ENCODE measurements at regions of chr4 and their contacts with region 1.

Region 1: GRCh38 chr4:36208893-36209473 is 35.3 kb downstream of the ARAP2 start:
- DNase-seq: peak in 6 of 9 donors; percentile 22 to 42 (median 32)
- ATAC-seq: peak; percentile 79
- H3K4me3 ChIP-seq: no peak overlapping the region
- H3K4me3 Mint-ChIP-seq: peak overlapping the region in 9 of 10 donors; percentile 34 to 68 (median 57)
- H3K27ac ChIP-seq: no peak overlapping the region
- H3K27ac Mint-ChIP-seq: peak overlapping the region in 7 of 9 donors; percentile 20 to 84 (median 45)
- H3K4me1 ChIP-seq: peaks cover 5 to 45% of the 10 kb centered on the region in 2 donors
- H3K4me1 Mint-ChIP-seq: peaks cover 16 to 53% (median 43%) of the 10 kb centered on the region in 7 donors
- H3K27me3 ChIP-seq: no peaks in the 10 kb centered on the region
- H3K27me3 Mint-ChIP-seq: no peaks in the 10 kb centered on the region

Region 2: DNA sequence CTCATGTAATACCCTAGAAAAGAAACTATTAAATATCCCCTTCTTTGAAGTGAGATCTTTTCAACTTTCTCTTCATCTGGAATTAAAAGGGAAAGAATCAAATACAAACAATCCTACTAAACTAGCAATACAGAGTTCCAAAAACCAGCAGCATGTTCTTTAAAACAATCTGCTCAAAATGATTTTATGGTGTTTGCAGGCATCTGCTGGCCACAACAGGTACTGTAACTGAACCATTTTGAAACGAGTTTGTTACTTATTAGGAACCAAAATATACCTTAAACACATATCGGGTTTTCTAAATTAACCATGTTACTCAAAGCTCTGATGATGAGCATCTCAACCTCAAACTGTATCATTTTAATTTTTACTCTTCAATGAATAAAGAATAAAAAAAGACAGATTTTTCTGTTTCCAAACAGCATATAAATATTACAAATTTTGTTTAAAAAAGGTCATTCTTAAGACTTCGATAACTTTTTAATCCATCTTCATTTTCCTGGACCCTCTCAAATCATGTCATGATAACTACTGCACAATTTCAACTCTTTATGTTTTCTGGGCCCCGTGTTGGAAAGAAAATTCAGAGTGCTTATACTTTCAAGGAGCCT is 21.2 kb before region 1 on chr4:
- CTCF ChIA-PET with region 1: no interaction called
- POLR2A ChIA-PET with region 1: no interaction called
- intact Hi-C with region 1: loop called in 1 of 2 experiments (anchors 2 kb)
- DNase-seq: peak in 3 of 9 donors; percentile 4 to 14 (median 7)
- ATAC-seq: no peak
- H3K4me3 ChIP-seq: no peak overlapping the region
- H3K4me3 Mint-ChIP-seq: no peak overlapping the region
- H3K27ac ChIP-seq: no peak overlapping the region
- H3K27ac Mint-ChIP-seq: no peak overlapping the region
- H3K4me1 ChIP-seq: peaks cover 5 to 52% of the 10 kb centered on the region in 2 donors
- H3K4me1 Mint-ChIP-seq: peaks cover 15 to 33% (median 21%) of the 10 kb centered on the region in 7 donors
- H3K27me3 ChIP-seq: no peaks in the 10 kb centered on the region
- H3K27me3 Mint-ChIP-seq: no peaks in the 10 kb centered on the region

Region 3: GRCh38 chr4:36224972-36225903 is 16.3 kb after region 1 on chr4:
- CTCF ChIA-PET with region 1: no interaction called
- POLR2A ChIA-PET with region 1: no interaction called
- intact Hi-C with region 1: loop called in 1 of 2 experiments (anchors 2 kb)
- DNase-seq: no peak
- ATAC-seq: no peak
- H3K4me3 ChIP-seq: no peak overlapping the region
- H3K4me3 Mint-ChIP-seq: peak overlapping the region; percentile 11 to 75 (median 53)
- H3K27ac ChIP-seq: no peak overlapping the region
- H3K27ac Mint-ChIP-seq: peak overlapping the region in 6 of 9 donors; percentile 15 to 88 (median 36)
- H3K4me1 ChIP-seq: peaks cover 35 to 37% of the 10 kb centered on the region in 2 donors
- H3K4me1 Mint-ChIP-seq: peaks cover 28 to 87% (median 75%) of the 10 kb centered on the region in 7 donors
- H3K27me3 ChIP-seq: no peaks in the 10 kb centered on the region
- H3K27me3 Mint-ChIP-seq: no peaks in the 10 kb centered on the region

Region 4: GRCh38 chr4:36292556-36293188 is 83.7 kb after region 1 on chr4:
- CTCF ChIA-PET with region 1: no interaction called
- POLR2A ChIA-PET with region 1: no interaction called
- intact Hi-C with region 1: no loop called
- DNase-seq: no peak
- ATAC-seq: no peak
- H3K4me3 ChIP-seq: no peak overlapping the region
- H3K4me3 Mint-ChIP-seq: no peak overlapping the region
- H3K27ac ChIP-seq: no peak overlapping the region
- H3K27ac Mint-ChIP-seq: no peak overlapping the region
- H3K4me1 ChIP-seq: peaks cover 0 to 10% of the 10 kb centered on the region in 2 donors
- H3K4me1 Mint-ChIP-seq: peaks cover 0 to 18% (median 0%) of the 10 kb centered on the region in 7 donors
- H3K27me3 ChIP-seq: no peaks in the 10 kb centered on the region
- H3K27me3 Mint-ChIP-seq: peaks cover 0 to 11% (median 0%) of the 10 kb centered on the region in 5 donors

Measured in naive thymus-derived CD4-positive, alpha-beta T cell (primary cell).